ENCODE measurements at regions of chr11 and their contacts with region 1.

Region 1: DNA sequence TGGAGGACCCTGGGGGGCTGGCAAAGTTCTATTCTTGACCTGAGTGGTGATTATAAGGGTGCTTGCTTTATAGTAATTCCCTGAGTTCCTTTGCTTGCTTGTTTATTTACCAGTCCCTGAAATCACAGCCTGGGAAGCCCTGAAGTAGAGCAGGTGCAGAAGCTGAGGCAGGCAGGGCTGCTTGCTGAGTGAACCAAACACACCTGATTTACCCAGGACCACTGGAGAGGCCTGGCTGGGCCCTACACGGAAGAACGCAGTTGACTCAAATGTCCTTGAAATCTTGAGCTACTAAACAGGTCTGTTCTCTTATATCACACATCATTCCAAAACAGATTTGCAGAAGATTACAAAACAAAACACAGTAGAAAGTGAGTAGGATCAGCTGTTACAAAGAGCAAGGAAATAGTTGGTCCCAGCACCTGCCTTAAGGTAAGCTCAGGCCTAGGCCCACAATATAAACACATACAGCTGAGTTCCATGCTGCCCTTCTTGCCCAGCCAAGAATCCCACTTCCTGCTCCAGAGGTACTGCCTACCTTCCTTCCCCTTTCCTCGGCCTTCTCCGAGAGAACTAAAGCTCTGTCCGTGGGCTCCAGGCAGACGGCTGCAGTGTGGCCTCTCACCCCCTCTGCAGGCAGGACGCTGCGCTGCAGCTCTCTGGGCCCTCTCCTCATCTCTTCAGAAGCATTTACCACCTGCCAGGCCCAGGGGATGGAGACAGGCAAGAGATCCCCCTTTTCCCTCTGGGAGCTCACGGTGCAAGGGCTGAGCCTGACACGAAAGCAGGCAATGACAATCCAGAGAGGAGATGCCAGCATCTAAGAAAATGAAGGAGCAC is 46.1 kb upstream of the SCUBE2 start:
- DNase-seq: peak; percentile 77
- H3K4me3 ChIP-seq: no peak overlapping the region; a peak in 1 of 4 replicates
- H3K27ac ChIP-seq: no peak overlapping the region
- H3K4me1 ChIP-seq: peaks cover 0 to 24% of the 10 kb centered on the region in 2 experiments; a peak in 3 of 4 replicates
- H3K27me3 ChIP-seq: no peaks in the 10 kb centered on the region
- CTCF ChIP-seq: peak; percentile 90
- EP300 ChIP-seq: no peak
- RAD21 ChIP-seq: peak; percentile 92

Region 2: DNA sequence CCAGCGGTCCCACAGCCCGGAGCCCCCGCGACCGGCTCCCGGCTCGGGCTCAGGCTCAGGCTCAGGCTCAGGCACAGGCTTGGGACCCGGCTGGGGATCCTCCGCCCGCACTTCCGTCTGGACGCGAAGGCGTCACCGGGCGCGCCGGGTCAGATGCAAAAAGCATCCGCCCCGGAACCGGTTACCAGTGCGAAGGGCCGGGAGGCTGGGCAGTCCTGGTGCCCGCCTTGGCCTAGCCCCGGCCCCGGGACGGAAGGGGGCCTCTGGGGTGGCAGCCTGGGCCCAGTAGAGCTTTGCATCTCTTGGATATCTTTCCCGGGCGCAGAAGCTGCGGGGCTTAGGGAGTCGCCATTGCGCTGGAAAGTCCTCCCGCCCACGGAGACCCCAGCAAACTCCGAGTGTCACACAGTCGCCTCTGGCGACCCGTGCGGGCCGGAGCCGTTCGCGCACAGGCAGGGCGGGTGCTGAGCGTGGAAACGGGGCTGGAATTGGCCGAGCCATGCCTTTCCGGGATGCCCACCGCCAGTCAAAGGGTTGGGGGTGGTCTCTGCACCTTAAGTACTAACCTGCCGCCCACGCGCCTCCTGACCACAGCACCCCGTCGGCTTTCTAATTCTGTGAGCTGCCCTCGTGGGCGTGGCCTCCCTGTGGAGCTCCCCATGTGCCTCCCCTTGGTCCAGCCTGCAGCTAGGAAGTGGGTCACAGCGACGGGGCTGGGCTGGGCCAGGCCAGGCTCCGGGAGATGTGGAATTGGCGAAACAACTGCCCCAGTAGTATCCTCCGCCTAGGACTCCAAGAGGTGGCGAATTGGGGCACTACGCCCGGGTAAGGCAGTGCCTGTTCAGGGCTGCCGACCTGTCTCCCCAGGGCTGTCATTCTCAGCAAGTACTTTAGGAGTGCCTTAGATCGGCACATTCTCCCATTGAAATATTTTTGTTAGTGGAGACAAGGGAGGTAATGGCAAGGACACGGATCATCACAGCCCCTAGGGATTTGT is 172.9 kb before region 1 on chr11 and contains the start of gene TMEM9B:
- CTCF ChIA-PET with region 1: interaction called, 12 read pairs
- POLR2A ChIA-PET with region 1: interaction called, 3 read pairs
- DNase-seq: peak; percentile 95
- H3K4me3 ChIP-seq: peak within 1 kb of the TSS; percentile 68 to 93
- H3K27ac ChIP-seq: peak within 1 kb of the TSS; percentile 83 to 96
- H3K4me1 ChIP-seq: peaks cover 3 to 13% of the 10 kb centered on the region in 2 experiments; a peak in 2 of 4 replicates
- H3K27me3 ChIP-seq: no peaks in the 10 kb centered on the region
- CTCF ChIP-seq: no peak
- EP300 ChIP-seq: no peak
- RAD21 ChIP-seq: peak; percentile 17; the same call in 1 of the 2 replicates
- polyA plus RNA-seq, gene TMEM9B: 21.8 and 29.3 TPM in 2 replicates

Region 3: DNA sequence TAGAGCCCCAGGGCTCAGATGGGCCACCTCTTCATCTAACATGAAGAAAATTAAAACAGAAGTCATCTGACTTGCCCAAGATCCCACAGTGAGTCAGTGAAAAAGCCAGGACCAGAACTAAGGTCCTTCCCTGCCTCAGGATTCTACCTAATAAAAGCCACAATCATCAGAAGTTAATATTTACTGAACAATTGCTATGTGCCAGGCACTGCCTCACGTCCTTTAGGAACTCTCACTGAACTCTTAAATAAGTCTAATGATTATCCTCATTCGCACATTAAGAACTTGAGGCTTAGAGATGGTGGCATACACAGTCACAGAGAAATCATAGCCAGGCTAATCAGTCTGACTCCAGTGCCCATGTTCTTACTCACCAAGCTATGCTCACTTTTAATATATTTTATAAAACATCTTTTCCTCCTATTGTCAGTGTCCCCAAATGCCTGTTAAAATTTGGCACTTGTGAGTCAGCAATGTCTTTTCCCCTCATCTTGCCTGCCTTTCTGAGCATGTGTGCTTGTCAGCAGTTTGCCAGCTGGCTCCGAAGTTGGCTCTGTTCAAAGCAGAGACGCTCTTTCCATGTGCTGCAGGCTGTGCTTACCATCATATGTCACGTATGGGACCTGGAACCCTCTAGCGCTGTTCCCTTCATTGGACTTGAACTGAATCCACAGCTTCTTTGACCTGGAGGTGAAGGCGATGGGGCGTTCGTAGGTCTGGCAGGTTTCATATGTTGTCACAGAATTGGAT is 112.2 kb before region 1 on chr11:
- CTCF ChIA-PET with region 1: interaction called, 205 read pairs
- POLR2A ChIA-PET with region 1: no interaction called
- DNase-seq: no peak
- H3K4me3 ChIP-seq: no peak overlapping the region
- H3K27ac ChIP-seq: no peak overlapping the region
- H3K4me1 ChIP-seq: no peaks in the 10 kb centered on the region
- H3K27me3 ChIP-seq: no peaks in the 10 kb centered on the region
- CTCF ChIP-seq: no peak
- EP300 ChIP-seq: no peak
- RAD21 ChIP-seq: no peak

Region 4: GRCh38 chr11:9092853-9093778 is 44.4 kb before region 1 on chr11:
- CTCF ChIA-PET with region 1: interaction called, 36 read pairs
- POLR2A ChIA-PET with region 1: no interaction called
- DNase-seq: peak; percentile 58
- H3K4me3 ChIP-seq: no peak overlapping the region
- H3K27ac ChIP-seq: no peak overlapping the region
- H3K4me1 ChIP-seq: peaks cover 0 to 16% of the 10 kb centered on the region in 2 experiments; a peak in 2 of 4 replicates
- H3K27me3 ChIP-seq: no peaks in the 10 kb centered on the region
- CTCF ChIP-seq: peak; percentile 41
- EP300 ChIP-seq: no peak
- RAD21 ChIP-seq: peak; percentile 42; the same call in 1 of the 2 replicates

Region 5: GRCh38 chr11:9150501-9150900 is 13.0 kb after region 1 on chr11:
- CTCF ChIA-PET with region 1: interaction called, 40 read pairs
- POLR2A ChIA-PET with region 1: no interaction called
- DNase-seq: no peak
- H3K4me3 ChIP-seq: no peak overlapping the region
- H3K27ac ChIP-seq: peak overlapping the region in 1 of 2 experiments; percentile 40; a peak in 2 of 4 replicates
- H3K4me1 ChIP-seq: peaks cover 0 to under 1% of the 10 kb centered on the region in 2 experiments; a peak in 1 of 4 replicates
- H3K27me3 ChIP-seq: no peaks in the 10 kb centered on the region
- CTCF ChIP-seq: no peak
- EP300 ChIP-seq: no peak
- RAD21 ChIP-seq: no peak

Region 6: DNA sequence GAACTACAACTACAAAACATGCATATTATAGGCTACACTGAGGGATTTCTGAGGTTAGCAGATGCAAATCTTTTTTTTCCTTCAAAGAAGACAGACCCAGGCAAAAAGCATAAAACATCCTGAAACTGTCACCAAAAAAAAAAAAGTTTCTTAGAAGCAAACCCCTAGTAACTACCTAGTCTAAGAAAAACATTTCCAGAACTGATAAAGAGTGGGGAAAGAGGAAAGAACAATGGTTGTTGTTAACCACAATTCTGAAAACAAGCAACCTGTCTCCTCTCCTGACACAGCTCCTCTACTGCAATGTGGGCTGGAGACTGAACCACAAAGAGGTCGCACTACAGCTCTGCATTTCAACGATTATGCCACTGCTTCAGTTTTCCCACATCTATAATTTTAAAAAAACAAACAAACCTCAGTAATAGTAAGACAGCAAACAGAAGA is 112.6 kb after region 1 on chr11:
- CTCF ChIA-PET with region 1: no interaction called
- POLR2A ChIA-PET with region 1: no interaction called
- DNase-seq: no peak
- H3K4me3 ChIP-seq: no peak overlapping the region
- H3K27ac ChIP-seq: peak overlapping the region; percentile 2 to 32; a peak in 2 of 4 replicates
- H3K4me1 ChIP-seq: no peaks in the 10 kb centered on the region; a peak in 1 of 4 replicates
- H3K27me3 ChIP-seq: no peaks in the 10 kb centered on the region
- CTCF ChIP-seq: no peak
- EP300 ChIP-seq: no peak
- RAD21 ChIP-seq: no peak